ENCODE measurements at regions of chr13 and their contacts with region 1.

Region 1: GRCh38 chr13:50334115-50334778 is 319.0 kb downstream of the KCNRG start:
- DNase-seq: no peak
- ATAC-seq: no peak
- H3K4me3 Mint-ChIP-seq: no peak overlapping the region
- H3K27ac Mint-ChIP-seq: no peak overlapping the region
- H3K4me1 Mint-ChIP-seq: no peaks in the 10 kb centered on the region
- H3K27me3 Mint-ChIP-seq: no peaks in the 10 kb centered on the region
- CTCF ChIP-seq: no peak

Region 2: DNA sequence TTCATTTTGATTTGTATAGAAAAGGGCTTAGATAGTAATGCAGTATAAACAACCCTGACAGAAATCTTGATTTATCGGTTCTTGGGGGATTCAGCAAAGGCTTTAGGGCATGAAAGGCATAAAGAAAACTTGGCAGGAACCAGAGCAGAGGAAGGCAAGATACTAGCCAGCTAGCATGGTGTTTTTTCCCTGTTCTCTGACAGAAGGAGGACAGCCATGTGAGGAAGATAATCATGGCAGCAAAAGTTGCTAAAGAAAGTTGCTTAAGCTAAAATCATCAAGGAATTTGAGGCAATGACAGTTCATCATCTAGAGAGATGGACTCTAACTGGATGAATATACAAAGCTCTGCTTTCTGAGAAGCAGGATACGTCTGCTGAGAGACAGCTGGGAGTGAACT is 24.9 kb before region 1 on chr13:
- CTCF ChIA-PET with region 1: no interaction called
- POLR2A ChIA-PET with region 1: no interaction called
- intact Hi-C with region 1: no loop called
- DNase-seq: no peak
- ATAC-seq: no peak
- H3K4me3 Mint-ChIP-seq: no peak overlapping the region
- H3K27ac Mint-ChIP-seq: no peak overlapping the region
- H3K4me1 Mint-ChIP-seq: peaks cover 4% of the 10 kb centered on the region
- H3K27me3 Mint-ChIP-seq: no peaks in the 10 kb centered on the region
- CTCF ChIP-seq: no peak

Region 3: GRCh38 chr13:50319635-50320255 is 14.5 kb before region 1 on chr13:
- CTCF ChIA-PET with region 1: no interaction called
- POLR2A ChIA-PET with region 1: interaction called, 10 read pairs
- intact Hi-C with region 1: no loop called
- DNase-seq: no peak
- ATAC-seq: no peak
- H3K4me3 Mint-ChIP-seq: no peak overlapping the region
- H3K27ac Mint-ChIP-seq: no peak overlapping the region
- H3K4me1 Mint-ChIP-seq: peaks cover 12% of the 10 kb centered on the region
- H3K27me3 Mint-ChIP-seq: no peaks in the 10 kb centered on the region
- CTCF ChIP-seq: no peak

Region 4: DNA sequence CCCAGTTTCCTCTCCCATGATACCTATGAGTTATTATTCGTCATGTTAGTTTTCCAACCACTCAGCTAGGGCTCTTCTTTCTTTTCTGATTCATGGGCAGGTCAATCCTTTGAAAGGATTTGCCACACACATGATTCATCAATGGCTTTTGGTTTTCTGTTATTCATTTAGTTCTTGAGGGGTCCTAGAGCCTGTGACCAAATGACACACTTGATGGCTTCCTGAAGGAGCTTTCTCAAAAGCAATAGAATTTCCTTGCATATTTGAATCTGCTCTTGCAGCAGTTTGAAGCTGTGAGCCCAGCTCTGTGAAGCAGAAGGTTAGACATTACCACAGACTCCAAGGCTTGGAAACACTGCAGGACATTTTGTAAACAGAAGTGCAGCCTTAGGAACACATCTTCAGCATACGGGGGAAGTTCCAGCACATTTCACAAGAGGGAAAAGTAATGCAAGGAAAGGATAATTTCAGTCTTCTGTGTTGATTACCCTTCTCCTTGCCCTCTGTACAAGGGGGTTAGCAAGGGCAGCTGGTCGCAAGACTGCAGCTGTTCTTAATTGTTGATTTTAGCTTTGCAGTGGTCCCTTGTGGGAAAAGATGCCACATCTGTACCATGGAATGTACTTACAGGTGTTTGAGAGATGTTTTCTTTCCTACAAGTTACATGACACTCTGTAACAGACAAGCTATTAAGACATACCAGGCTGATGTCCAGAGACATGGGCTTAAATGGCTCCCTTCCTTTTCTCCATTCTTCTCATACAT is 19.6 kb after region 1 on chr13:
- CTCF ChIA-PET with region 1: no interaction called
- POLR2A ChIA-PET with region 1: no interaction called
- intact Hi-C with region 1: no loop called
- DNase-seq: no peak
- ATAC-seq: no peak
- H3K4me3 Mint-ChIP-seq: no peak overlapping the region
- H3K27ac Mint-ChIP-seq: no peak overlapping the region
- H3K4me1 Mint-ChIP-seq: peaks cover 34% of the 10 kb centered on the region
- H3K27me3 Mint-ChIP-seq: no peaks in the 10 kb centered on the region
- CTCF ChIP-seq: no peak